Right ventricle myocardium superior (tissue), 1 donor: ENCODE measurements at regions of chr2 and their contacts with region 1.

Region 1: GRCh38 chr2:198127627-198128026 is 323.2 kb downstream of the PLCL1 start:
- DNase-seq: no peak
- ATAC-seq: peak; percentile 87

Region 2: GRCh38 chr2:197705121-197705911 is 422.3 kb before region 1 on chr2 and contains the start of gene MARS2:
- intact Hi-C with region 1: loop called (anchors 5 kb)
- DNase-seq: peak; percentile 97
- ATAC-seq: peak; percentile 98
- total RNA-seq, gene MARS2: 6.6 TPM

Region 3: GRCh38 chr2:197804049-197804757 is 323.4 kb before region 1 on chr2 and contains the start of gene PLCL1:
- intact Hi-C with region 1: loop called (anchors 5 kb)
- DNase-seq: peak; percentile 96
- ATAC-seq: peak; percentile 91
- total RNA-seq, gene PLCL1: 93.3 TPM

Region 4: GRCh38 chr2:198055716-198056115 is 71.9 kb before region 1 on chr2:
- intact Hi-C with region 1: loop called (anchors 5 kb)
- DNase-seq: no peak
- ATAC-seq: no peak

Region 5: DNA sequence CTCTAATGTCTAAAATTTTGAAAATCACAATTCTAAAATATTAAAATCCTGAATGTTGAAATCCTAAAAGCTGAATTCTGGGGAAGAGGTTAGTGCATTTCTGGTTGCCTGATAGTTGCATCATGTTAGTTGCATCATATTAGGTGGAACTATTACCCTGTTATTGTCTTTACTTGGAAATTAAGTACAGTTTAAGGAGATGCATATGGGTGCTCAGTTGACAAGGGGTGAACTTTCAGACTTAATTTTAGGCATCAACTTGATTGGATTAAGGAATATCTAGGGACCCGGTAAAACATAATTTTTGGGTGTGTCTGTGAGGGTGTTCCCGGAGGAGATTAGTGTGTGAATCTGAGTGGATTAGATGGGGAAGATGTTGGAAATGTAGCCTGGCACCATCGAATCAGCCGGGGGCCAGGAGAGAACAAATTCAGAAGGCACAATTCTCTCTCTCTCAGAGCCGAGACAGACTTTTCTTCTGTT is 86.5 kb after region 1 on chr2:
- intact Hi-C with region 1: no loop called
- DNase-seq: no peak
- ATAC-seq: no peak

Region 6: GRCh38 chr2:198296665-198297308 is 169.2 kb after region 1 on chr2:
- intact Hi-C with region 1: loop called (anchors 10 kb)
- DNase-seq: no peak
- ATAC-seq: peak; percentile 89